Sigmoid colon (tissue), 7 donors: ENCODE measurements at regions of chr5 and their contacts with region 1.

Region 1: GRCh38 chr5:43105369-43106289 is 15.1 kb upstream of the ZNF131 start:
- DNase-seq: peak; percentile 94
- H3K4me3 ChIP-seq: peak overlapping the region; percentile 14 to 40 (median 40)
- H3K27ac ChIP-seq: peak overlapping the region; percentile 53 to 59 (median 56)
- H3K4me1 ChIP-seq: peaks cover 0 to 12% (median 3%) of the 10 kb centered on the region in 4 donors
- H3K27me3 ChIP-seq: no peaks in the 10 kb centered on the region
- CTCF ChIP-seq: peak; percentile 98 to 99 (median 99)
- EP300 ChIP-seq: no peak
- POLR2A ChIP-seq: no peak

Region 2: DNA sequence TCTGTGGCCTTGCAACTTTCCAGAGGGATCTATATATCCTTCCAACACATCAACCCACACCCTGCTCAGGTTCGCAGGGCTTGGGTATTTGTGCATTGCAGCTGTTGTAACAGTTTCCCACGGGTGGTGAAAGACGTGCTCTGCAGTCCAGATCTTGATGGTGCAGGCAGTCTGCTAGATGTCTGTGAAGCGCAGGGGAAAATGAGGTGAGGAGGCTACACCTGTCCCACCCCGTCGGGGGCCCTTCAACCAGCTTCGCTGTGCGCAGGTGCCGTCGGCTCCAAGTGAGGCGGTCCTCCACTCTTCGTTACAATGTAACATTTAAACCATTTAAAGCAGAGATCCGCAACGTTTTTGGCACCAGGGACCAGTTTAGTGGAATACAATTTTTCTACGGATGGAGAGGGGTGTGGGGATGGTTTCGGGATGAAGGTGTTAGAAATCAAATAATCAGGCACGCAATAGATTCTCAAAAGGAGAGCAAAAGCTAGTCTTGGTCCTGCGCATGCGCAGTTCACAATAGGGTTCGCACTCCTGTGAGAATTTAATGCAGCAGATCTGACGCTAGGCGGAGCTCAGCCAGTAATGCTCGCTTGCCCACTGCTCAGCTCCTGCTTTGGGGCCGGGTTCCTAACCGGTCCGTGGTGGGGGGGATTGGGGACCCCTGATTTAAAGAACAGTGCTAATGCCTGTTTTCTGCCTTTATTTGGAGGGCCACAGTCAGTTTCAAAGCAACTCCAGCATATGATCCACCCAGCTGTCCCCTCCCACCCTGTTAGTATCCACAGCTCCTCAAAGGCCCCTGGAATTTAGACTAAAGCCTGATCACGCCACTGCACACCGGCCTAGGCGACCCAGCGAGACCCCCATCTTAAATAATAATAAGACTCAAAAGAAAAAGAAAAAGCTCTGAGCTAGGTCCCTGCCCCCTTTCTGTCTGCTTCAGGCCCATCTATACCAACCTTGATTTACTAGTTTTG is 196.8 kb before region 1 on chr5:
- intact Hi-C with region 1: loop called (anchors 1 kb)
- DNase-seq: peak; percentile 94
- H3K4me3 ChIP-seq: peak overlapping the region; percentile 32 to 51 (median 47)
- H3K27ac ChIP-seq: no peak overlapping the region
- H3K4me1 ChIP-seq: peaks cover 0 to 5% (median 4%) of the 10 kb centered on the region in 4 donors
- H3K27me3 ChIP-seq: peaks cover 0 to 7% (median 0%) of the 10 kb centered on the region in 3 donors
- CTCF ChIP-seq: peak; percentile 65 to 86 (median 79)
- EP300 ChIP-seq: no peak
- POLR2A ChIP-seq: no peak

Region 3: DNA sequence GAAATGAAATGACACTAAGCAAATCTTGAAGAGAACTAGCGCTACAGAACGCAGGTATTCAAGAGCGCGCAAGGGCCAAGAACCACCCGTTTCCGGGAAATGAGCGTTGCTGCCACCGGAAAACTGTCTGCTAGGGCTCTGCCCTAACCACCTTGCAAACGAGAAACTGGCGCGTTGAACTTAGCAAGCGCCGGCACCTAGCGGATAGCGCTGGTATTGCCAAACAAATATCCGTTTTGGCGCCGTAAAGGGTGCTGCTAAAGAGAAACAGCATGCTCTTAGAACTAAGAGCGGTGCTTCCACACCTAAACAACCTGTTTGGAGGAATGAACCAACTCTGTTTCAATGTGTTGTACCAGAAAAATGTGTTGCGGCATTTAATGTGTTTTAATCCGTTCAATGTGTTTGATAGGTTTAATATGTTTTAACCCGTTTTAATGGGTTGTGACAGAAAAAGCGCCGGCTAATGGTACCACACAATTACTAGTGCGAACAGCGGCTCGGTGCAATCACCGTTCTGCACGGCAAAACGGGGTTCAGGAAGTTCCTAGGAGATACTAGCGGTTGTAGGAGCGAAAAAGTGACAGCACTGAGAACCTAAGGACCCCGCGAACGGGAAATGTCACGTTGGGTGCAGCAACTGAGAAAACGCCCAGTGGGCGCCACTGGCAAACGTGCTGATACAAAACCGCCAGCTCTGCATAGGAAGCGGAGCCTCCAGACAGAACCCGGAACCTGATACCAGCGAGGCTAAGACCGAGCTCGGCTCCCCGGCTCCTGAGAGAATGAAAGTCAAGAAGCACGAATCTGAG is 65.1 kb before region 1 on chr5 and contains the start of gene ANXA2R:
- intact Hi-C with region 1: no loop called
- DNase-seq: peak; percentile 92
- H3K4me3 ChIP-seq: peak within 1 kb of the TSS; percentile 60 to 67 (median 64)
- H3K27ac ChIP-seq: peak within 1 kb of the TSS; percentile 89 to 92 (median 89)
- H3K4me1 ChIP-seq: peaks cover 0 to 47% (median 31%) of the 10 kb centered on the region in 4 donors
- H3K27me3 ChIP-seq: peaks cover 20 to 89% (median 50%) of the 10 kb centered on the region in 3 donors
- CTCF ChIP-seq: peak; percentile 49 to 78 (median 62)
- EP300 ChIP-seq: no peak
- POLR2A ChIP-seq: peak in 1 of 2 donors; percentile 12
- total RNA-seq, gene ANXA2R: 1.8 to 4.4 (median 3.7) TPM

Region 4: DNA sequence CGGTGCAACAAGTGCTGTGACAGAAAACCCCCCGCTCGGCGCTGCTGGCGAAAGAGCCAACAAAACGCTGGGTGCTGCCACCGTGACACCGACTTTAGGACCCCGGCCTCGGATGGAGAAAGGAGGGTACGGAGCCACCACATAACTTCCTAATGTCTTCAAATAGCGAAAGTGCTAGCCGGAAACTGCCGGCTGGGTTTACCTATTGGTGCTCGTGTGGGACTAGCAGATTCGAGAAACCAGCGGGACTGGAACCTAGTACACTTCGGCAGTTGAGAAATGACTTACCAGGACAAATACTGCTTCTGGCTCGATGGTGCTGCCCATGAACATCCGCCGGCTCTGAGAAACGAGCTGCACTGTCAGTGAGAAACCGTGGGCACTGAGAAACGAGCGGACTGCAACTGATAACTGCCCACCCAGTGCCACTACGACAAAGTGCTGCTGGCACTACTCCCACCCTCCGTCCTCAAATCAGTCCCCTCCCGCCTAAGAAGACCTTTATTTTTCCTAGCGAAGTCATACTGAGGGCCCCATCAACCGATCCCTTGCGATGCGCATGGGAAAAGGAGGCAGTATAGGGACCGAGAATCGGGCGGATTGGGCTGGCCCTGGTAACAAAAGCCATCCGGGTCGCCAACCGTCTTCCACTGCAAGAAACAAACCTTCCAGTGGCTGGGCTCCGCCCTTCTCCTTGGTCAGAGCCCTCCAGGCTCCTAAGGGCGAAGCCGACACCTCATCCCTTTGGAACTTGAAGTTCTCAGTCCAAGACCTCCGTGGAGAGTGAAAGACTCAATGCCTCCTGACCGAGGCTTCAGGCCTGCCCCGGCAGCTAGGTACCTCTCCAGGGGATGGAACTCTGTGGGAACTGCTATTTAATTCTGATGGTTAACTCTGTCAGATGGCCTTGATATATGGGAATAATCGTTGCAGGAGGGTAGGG is 38.6 kb before region 1 on chr5:
- intact Hi-C with region 1: loop called (anchors 5 kb)
- DNase-seq: peak; percentile 93
- H3K4me3 ChIP-seq: peak overlapping the region; percentile 65 to 91 (median 80)
- H3K27ac ChIP-seq: peak overlapping the region; percentile 94 to 100 (median 98)
- H3K4me1 ChIP-seq: peaks cover 0 to 38% (median 25%) of the 10 kb centered on the region in 4 donors
- H3K27me3 ChIP-seq: no peaks in the 10 kb centered on the region
- CTCF ChIP-seq: no peak
- EP300 ChIP-seq: no peak
- POLR2A ChIP-seq: peak; percentile 78 to 83

Region 5: DNA sequence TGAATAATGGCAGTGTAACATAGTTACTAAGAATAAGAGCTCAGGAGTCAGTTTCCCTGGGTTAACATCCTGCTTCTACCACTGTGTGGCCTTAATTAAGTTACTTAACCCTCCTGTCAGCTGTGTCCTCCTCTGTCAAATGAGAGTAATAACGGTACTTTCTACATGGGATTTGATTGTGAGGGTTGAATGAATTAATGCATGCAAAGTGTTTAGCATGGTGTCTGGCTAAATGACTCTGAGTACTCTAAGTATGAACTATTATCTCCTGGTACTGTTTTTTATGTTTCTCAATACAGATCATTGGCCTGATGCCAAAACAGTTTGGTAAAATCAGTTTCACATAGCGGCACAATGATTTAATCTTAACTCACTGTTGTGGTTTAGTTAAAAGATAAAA is 34.7 kb after region 1 on chr5:
- intact Hi-C with region 1: no loop called
- DNase-seq: no peak
- H3K4me3 ChIP-seq: no peak overlapping the region
- H3K27ac ChIP-seq: no peak overlapping the region
- H3K4me1 ChIP-seq: no peaks in the 10 kb centered on the region
- H3K27me3 ChIP-seq: no peaks in the 10 kb centered on the region
- CTCF ChIP-seq: no peak
- EP300 ChIP-seq: no peak
- POLR2A ChIP-seq: no peak

Region 6: GRCh38 chr5:43389679-43390329 is 284.2 kb after region 1 on chr5:
- intact Hi-C with region 1: loop called (anchors 5 kb)
- DNase-seq: no peak
- H3K4me3 ChIP-seq: no peak overlapping the region
- H3K27ac ChIP-seq: no peak overlapping the region
- H3K4me1 ChIP-seq: peaks cover 0 to 9% (median 0%) of the 10 kb centered on the region in 4 donors
- H3K27me3 ChIP-seq: no peaks in the 10 kb centered on the region
- CTCF ChIP-seq: peak; percentile 43 to 66 (median 62)
- EP300 ChIP-seq: no peak
- POLR2A ChIP-seq: no peak